ENCODE measurements at regions of chr4 and their contacts with region 1.

Region 1: GRCh38 chr4:153521999-153522801 is 56.0 kb downstream of the TMEM131L start:
- DNase-seq: peak; percentile 52 to 86
- ATAC-seq: peak; percentile 40 to 66 (median 60)
- H3K4me3 ChIP-seq: peak overlapping the region; percentile 1
- H3K4me3 Mint-ChIP-seq: peak overlapping the region; percentile 87
- H3K27ac ChIP-seq: peak overlapping the region; percentile 73
- H3K27ac Mint-ChIP-seq: peak overlapping the region; percentile 90 to 92
- H3K4me1 ChIP-seq: peaks cover 77% of the 10 kb centered on the region
- H3K4me1 Mint-ChIP-seq: peaks cover 100% of the 10 kb centered on the region in 2 donors
- H3K27me3 ChIP-seq: no peaks in the 10 kb centered on the region
- H3K27me3 Mint-ChIP-seq: no peaks in the 10 kb centered on the region
- CTCF ChIP-seq: no peak

Region 2: DNA sequence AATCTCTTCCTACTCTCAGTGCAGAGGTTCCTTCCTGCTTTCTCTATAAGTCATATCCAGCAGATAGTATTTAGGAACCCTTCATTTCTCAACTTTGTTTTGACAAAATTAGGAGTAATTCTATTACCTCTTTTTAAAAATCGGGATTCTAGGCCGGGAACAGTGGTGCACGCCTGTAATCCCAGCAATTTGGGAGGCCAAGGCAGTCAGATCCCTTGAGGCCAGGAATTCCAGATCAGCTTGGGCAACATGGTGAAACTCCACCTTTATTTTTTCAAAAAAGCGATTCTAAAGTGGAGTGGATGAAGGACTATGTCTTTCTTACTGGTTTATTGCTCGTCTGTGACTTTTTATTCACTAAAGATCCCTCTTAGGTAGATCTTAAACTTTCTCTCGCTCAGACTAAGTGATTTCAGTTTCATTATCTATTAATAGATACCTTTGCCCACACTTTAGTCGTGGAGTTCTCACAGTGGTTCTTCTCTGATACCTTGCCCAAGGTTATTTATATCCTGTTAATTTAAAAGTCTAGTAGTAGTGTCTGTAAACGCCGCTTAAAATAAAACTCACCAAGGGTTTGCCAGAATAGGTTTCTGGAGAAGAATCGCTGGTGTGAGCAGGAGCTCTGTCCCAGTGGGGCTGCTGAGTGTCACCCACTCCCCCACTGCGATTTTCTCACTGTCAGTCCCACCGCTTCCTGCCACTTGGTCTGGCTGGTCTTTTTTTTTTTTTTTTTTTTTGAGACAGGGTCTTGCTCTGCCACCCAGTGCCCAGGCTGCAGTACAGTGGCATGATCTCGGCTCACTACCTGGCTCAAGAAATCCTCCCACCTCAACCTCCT is 83.1 kb before region 1 on chr4:
- intact Hi-C with region 1: loop called (anchors 5 kb)
- DNase-seq: peak; percentile 38 to 66
- ATAC-seq: peak; percentile 86 to 92 (median 87)
- H3K4me3 ChIP-seq: peak overlapping the region; percentile 51
- H3K4me3 Mint-ChIP-seq: peak overlapping the region; percentile 89
- H3K27ac ChIP-seq: peak overlapping the region; percentile 98
- H3K27ac Mint-ChIP-seq: peak overlapping the region; percentile 90 to 92
- H3K4me1 ChIP-seq: peaks cover 30% of the 10 kb centered on the region
- H3K4me1 Mint-ChIP-seq: peaks cover 19 to 20% of the 10 kb centered on the region in 2 donors
- H3K27me3 ChIP-seq: no peaks in the 10 kb centered on the region
- H3K27me3 Mint-ChIP-seq: no peaks in the 10 kb centered on the region
- CTCF ChIP-seq: no peak

Region 3: DNA sequence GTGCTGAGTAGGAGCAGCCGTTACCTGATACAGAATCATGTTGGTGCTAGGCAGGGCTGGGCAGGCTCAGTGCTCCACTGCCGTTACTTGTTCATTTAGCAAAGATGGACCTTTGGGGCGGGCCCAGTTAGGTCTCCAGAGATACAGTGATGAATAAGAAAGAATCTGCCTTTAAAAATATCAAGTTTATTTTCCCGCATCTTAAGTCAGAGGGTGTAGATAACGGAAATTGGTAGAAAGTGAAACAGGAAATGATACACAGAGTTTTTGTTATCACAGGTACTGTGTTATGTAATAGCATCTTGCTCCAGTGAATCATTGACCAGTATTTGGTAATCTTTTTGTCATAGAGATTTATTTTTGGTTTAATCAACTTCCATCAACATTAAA is 50.5 kb before region 1 on chr4:
- intact Hi-C with region 1: loop called (anchors 2 kb)
- DNase-seq: peak; percentile 33 to 76
- ATAC-seq: peak; percentile 66 to 73 (median 67)
- H3K4me3 ChIP-seq: peak overlapping the region; percentile 15
- H3K4me3 Mint-ChIP-seq: peak overlapping the region; percentile 82
- H3K27ac ChIP-seq: peak overlapping the region; percentile 81
- H3K27ac Mint-ChIP-seq: peak overlapping the region; percentile 96 to 98
- H3K4me1 ChIP-seq: peaks cover 44% of the 10 kb centered on the region
- H3K4me1 Mint-ChIP-seq: peaks cover 70 to 84% of the 10 kb centered on the region in 2 donors
- H3K27me3 ChIP-seq: no peaks in the 10 kb centered on the region
- H3K27me3 Mint-ChIP-seq: no peaks in the 10 kb centered on the region
- CTCF ChIP-seq: no peak

Region 4: GRCh38 chr4:153497988-153498967 is 23.9 kb before region 1 on chr4:
- intact Hi-C with region 1: loop called (anchors 2 kb)
- DNase-seq: peak in 1 of 2 donors; percentile 55
- ATAC-seq: peak in 2 of 3 donors; percentile 29 to 38
- H3K4me3 ChIP-seq: no peak overlapping the region
- H3K4me3 Mint-ChIP-seq: peak overlapping the region; percentile 53
- H3K27ac ChIP-seq: peak overlapping the region; percentile 79
- H3K27ac Mint-ChIP-seq: peak overlapping the region; percentile 78 to 89
- H3K4me1 ChIP-seq: peaks cover 69% of the 10 kb centered on the region
- H3K4me1 Mint-ChIP-seq: peaks cover 86 to 88% of the 10 kb centered on the region in 2 donors
- H3K27me3 ChIP-seq: no peaks in the 10 kb centered on the region
- H3K27me3 Mint-ChIP-seq: no peaks in the 10 kb centered on the region
- CTCF ChIP-seq: no peak